ENCODE measurements at regions of chr13 and their contacts with region 1.

Region 1: GRCh38 chr13:29923554-29924481 is 73.4 kb upstream of the UBL3 start:
- DNase-seq: peak; percentile 97
- H3K4me3 Mint-ChIP-seq: peak overlapping the region; percentile 37
- H3K27ac Mint-ChIP-seq: peak overlapping the region; percentile 98
- H3K4me1 Mint-ChIP-seq: peaks cover 71% of the 10 kb centered on the region
- H3K27me3 Mint-ChIP-seq: no peaks in the 10 kb centered on the region
- CTCF ChIP-seq: peak; percentile 94

Region 2: GRCh38 chr13:28753243-28753887 is 1170.5 kb before region 1 on chr13:
- CTCF ChIA-PET with region 1: no interaction called
- POLR2A ChIA-PET with region 1: no interaction called
- intact Hi-C with region 1: no loop called
- DNase-seq: peak; percentile 93
- H3K4me3 Mint-ChIP-seq: peak overlapping the region; percentile 21
- H3K27ac Mint-ChIP-seq: peak overlapping the region; percentile 91
- H3K4me1 Mint-ChIP-seq: peaks cover 15% of the 10 kb centered on the region
- H3K27me3 Mint-ChIP-seq: no peaks in the 10 kb centered on the region
- CTCF ChIP-seq: no peak

Region 3: GRCh38 chr13:29771247-29771646 is 152.6 kb before region 1 on chr13:
- CTCF ChIA-PET with region 1: interaction called, 5 read pairs
- POLR2A ChIA-PET with region 1: interaction called, 5 read pairs
- intact Hi-C with region 1: loop called (anchors 2 kb)
- DNase-seq: peak; percentile 45
- H3K4me3 Mint-ChIP-seq: no peak overlapping the region
- H3K27ac Mint-ChIP-seq: no peak overlapping the region
- H3K4me1 Mint-ChIP-seq: no peaks in the 10 kb centered on the region
- H3K27me3 Mint-ChIP-seq: no peaks in the 10 kb centered on the region
- CTCF ChIP-seq: peak; percentile 43

Region 4: GRCh38 chr13:29902101-29902952 is 21.5 kb before region 1 on chr13:
- CTCF ChIA-PET with region 1: interaction called, 18 read pairs
- POLR2A ChIA-PET with region 1: interaction called, 105 read pairs
- intact Hi-C with region 1: loop called (anchors 2 kb)
- DNase-seq: peak; percentile 94
- H3K4me3 Mint-ChIP-seq: peak overlapping the region; percentile 59
- H3K27ac Mint-ChIP-seq: peak overlapping the region; percentile 90
- H3K4me1 Mint-ChIP-seq: peaks cover 30% of the 10 kb centered on the region
- H3K27me3 Mint-ChIP-seq: no peaks in the 10 kb centered on the region
- CTCF ChIP-seq: no peak

Region 5: GRCh38 chr13:29908416-29908815 is 15.4 kb before region 1 on chr13:
- CTCF ChIA-PET with region 1: interaction called, 19 read pairs
- POLR2A ChIA-PET with region 1: interaction called, 105 read pairs
- intact Hi-C with region 1: loop called (anchors 2 kb)
- DNase-seq: peak; percentile 75
- H3K4me3 Mint-ChIP-seq: peak overlapping the region; percentile 7
- H3K27ac Mint-ChIP-seq: peak overlapping the region; percentile 92
- H3K4me1 Mint-ChIP-seq: peaks cover 55% of the 10 kb centered on the region
- H3K27me3 Mint-ChIP-seq: no peaks in the 10 kb centered on the region
- CTCF ChIP-seq: no peak

Region 6: DNA sequence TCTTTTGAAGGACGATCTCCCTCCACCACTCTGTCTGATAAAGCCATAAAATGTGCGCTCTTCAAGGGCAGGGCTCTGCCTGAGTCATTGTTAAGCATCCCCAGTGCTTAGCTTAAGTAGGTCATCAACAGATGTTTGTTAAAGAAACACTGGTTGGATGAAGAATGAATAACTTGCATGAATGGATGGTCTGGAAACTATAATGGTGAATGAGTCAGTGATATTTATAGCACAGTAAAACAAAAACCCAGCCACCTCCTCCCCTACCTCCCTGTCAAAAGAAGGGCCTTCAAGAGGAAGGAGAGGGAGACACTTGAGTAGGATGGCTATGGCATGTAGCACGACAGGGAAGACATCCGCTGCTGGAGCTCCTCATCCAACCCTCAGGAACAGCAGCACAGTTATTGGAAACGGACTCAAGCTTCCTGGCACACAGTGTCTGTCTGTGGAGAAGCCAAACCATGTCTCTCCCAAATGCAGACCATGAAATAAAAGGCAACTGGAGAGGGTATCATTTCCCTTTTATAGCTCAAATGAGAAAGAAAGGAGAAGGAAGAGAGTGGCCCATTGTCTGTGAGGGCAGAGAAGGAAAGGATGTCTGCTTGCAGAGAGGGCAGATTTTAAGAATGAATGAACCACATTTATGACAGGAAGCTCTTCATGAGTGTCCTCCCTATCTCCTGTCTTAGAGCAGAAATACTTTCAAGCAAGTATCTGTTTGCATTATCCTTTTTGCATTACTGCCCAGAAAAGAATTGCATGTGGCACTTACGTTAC is 110.1 kb after region 1 on chr13:
- CTCF ChIA-PET with region 1: no interaction called
- POLR2A ChIA-PET with region 1: no interaction called
- intact Hi-C with region 1: no loop called
- DNase-seq: peak; percentile 36
- H3K4me3 Mint-ChIP-seq: no peak overlapping the region
- H3K27ac Mint-ChIP-seq: no peak overlapping the region
- H3K4me1 Mint-ChIP-seq: peaks cover 13% of the 10 kb centered on the region
- H3K27me3 Mint-ChIP-seq: no peaks in the 10 kb centered on the region
- CTCF ChIP-seq: no peak